Adrenal gland (tissue), 19 donors: ENCODE measurements at regions of chr13 and their contacts with region 1.

Region 1: DNA sequence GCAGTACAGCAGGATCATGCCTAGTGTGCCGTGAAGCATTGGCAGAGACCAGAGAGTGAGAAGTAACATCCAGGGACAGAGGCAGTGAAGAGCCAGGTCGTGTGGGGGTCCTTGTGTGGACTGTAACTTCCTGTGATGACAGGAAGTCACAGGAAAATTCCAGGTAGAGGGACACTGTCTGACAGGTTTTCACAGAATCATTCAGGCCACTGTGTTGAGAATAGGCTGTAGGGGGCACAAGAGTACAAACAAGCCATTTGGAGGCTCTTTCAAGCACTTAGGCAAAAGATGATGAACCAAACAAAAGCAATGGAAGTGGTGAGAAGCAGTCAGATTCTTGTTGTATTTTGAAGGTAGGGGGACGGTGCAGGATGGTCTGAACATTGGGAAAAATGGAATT is 46.4 kb downstream of the N4BP2L1 start:
- DNase-seq: peak; percentile 16 to 65 (median 34)
- H3K4me3 ChIP-seq: no peak overlapping the region
- H3K27ac ChIP-seq: no peak overlapping the region
- H3K4me1 ChIP-seq: no peaks in the 10 kb centered on the region
- H3K27me3 ChIP-seq: no peaks in the 10 kb centered on the region
- CTCF ChIP-seq: peak; percentile 15 to 75 (median 60)
- POLR2A ChIP-seq: no peak

Region 2: GRCh38 chr13:32581177-32581786 is 199.7 kb after region 1 on chr13:
- intact Hi-C with region 1: loop called in 1 of 2 experiments (anchors 5 kb)
- DNase-seq: no peak
- H3K4me3 ChIP-seq: no peak overlapping the region
- H3K27ac ChIP-seq: no peak overlapping the region
- H3K4me1 ChIP-seq: no peaks in the 10 kb centered on the region
- H3K27me3 ChIP-seq: no peaks in the 10 kb centered on the region
- CTCF ChIP-seq: peak; percentile 23 to 68 (median 54)
- POLR2A ChIP-seq: no peak